ENCODE measurements at regions of chr11 and their contacts with region 1.

Region 1: DNA sequence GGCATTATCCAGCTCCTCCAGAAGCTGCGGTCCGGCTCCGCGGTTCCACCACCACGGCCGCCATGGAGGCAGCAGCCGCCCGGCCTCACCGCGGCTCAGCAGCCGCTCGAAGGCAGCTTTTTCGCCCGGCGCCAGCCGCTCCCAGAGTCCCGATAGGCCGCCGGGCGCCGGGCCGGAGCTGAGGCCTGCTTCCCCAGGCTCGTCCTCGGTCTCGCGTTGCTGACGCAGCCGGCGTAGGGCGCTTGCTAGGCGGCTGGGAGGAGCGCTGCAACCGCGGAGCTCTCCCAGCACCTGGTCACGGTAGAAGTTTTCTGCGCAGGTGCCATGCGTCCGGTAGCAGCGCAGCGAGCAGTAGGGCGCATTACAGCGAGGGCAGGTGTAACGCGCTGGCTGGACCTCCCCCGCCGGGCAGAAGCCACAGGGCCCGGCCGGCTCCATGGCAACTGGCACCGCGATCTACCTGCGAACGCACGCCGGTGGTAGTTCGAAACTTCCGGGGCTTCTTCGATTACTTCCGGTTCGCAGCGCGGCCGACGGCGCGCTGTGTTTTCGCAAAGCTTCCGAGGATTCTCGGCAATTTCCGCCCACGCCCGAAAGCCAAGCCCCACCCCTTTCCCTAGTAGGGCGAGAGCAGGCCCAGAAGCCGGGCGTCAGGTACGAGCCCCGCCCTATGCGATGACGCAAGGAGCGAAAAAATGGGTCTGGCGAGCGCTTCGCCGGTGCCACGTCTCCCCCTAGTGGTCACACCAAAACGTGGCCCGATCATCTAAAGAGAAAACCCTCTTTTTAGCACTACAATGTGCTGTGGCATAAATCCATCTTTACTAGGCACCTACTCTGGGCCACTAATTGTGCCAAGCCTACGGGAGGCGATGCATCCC is at the start of gene ZNHIT2:
- DNase-seq: peak; percentile 98 to 99
- H3K4me3 ChIP-seq: peak within 1 kb of the TSS; percentile 61 to 83 (median 72)
- H3K27ac ChIP-seq: peak within 1 kb of the TSS; percentile 78
- H3K4me1 ChIP-seq: peaks cover 2 to 22% (median 13%) of the 10 kb centered on the region in 4 experiments
- H3K27me3 ChIP-seq: no peaks in the 10 kb centered on the region
- CTCF ChIP-seq: peak in 2 of 3 experiments; percentile 79 to 92; a peak in 3 of 4 replicates
- EP300 ChIP-seq: peak in 1 of 2 experiments; percentile 75; a peak in 1 of 3 replicates
- POLR2A ChIP-seq: peak in 1 of 2 experiments; percentile 89; a peak in 2 of 3 replicates
- RAD21 ChIP-seq: peak; percentile 76 to 80
- total RNA-seq, gene ZNHIT2: 13.0 and 14.8 TPM in 2 replicates

Region 2: DNA sequence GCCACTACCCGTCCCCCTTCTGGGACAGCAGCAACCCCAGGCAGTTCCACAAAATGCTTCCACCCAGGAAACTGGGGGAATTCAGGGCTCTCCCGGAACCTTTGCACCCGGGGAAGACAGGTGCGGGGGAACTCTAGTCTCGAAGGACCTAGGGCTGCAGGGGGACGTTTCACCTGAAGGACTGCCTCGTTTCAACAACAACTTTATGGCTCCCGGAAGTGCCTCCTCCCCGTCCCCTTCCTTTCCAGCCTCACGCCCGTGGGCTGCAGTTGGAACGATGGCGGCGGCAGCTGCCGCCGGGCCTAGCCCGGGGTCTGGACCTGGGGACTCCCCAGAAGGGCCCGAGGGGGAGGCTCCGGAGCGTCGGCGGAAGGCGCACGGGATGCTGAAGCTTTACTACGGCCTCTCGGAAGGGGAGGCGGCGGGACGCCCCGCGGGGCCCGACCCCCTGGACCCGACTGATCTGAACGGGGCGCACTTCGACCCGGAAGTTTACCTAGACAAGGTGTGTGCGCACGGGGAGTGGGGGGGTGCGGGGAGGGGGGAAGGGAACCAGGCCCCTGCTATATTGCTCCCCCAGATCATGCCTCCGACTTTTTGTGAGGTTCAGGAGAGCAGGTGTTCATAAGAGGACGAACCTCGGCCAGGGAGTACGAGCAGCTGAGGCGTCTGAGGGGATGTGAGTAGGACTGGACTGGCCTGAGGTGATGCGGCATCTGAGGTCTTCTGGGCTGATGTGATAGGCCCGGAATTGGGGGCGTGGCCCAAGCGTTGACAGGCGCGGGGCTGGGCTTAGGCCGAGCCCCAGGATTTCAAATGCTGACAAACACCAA is 21.3 kb before region 1 on chr11 and contains the start of gene VPS51:
- CTCF ChIA-PET with region 1: interaction called, 85 read pairs
- POLR2A ChIA-PET with region 1: interaction called, 186 read pairs
- DNase-seq: peak; percentile 70 to 93
- H3K4me3 ChIP-seq: peak within 1 kb of the TSS; percentile 78 to 88 (median 78)
- H3K27ac ChIP-seq: peak within 1 kb of the TSS; percentile 67; the same call in 1 of the 2 replicates
- H3K4me1 ChIP-seq: peaks cover 0 to 6% (median 4%) of the 10 kb centered on the region in 4 experiments; a peak in 6 of 7 replicates
- H3K27me3 ChIP-seq: no peaks in the 10 kb centered on the region
- CTCF ChIP-seq: no peak
- EP300 ChIP-seq: peak in 1 of 2 experiments; percentile 86; a peak in 2 of 3 replicates
- POLR2A ChIP-seq: peak; percentile 75 to 86
- RAD21 ChIP-seq: no peak
- total RNA-seq, gene VPS51: 97.4 and 108 TPM in 2 replicates

Region 3: DNA sequence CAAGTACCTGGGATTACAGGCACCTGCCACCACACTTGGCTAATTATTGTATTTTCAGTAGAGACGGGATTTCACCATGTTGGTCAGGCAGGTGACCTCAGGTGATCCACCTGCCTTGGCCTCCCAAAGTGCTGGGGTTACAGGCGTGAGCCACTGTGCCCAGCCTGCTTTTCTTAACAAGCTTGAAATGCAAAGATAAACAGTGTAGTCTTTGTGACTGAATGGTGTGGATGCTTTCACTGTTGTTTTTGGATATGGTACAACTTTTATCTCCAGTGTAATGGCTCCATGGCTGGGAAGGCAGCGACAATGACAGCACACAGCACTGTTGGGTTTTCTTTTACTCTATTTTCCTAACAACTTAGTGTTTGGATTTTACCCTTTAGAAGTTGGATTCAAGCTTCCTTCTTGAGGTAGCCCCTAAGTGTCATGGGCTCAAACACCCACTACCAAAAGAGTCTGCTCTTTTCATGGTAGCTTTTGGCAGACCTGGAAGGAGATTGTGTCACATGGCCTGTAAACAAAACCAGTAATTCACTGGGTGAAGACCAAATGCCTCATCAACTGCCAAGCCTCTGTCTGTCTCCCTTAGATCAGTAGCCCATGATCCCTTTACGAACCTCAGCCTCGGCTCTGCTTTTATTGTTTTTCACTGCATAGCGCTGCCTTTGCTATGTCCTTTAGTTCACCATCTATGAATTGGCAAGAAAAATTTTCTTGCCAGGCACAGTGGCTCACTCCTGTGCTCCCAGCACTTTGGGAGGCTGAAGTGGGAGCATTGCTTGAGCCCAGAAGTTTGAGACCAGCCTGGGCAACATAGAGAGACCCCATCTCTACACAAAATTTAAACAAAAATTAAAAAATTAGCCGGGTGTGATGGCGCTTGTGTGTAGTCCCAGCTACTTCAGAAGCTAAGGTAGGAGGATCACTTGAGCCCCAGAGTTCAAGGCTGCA is 15.0 kb before region 1 on chr11:
- CTCF ChIA-PET with region 1: interaction called, 85 read pairs
- POLR2A ChIA-PET with region 1: interaction called, 186 read pairs
- DNase-seq: no peak
- H3K4me3 ChIP-seq: no peak overlapping the region
- H3K27ac ChIP-seq: no peak overlapping the region
- H3K4me1 ChIP-seq: no peaks in the 10 kb centered on the region
- H3K27me3 ChIP-seq: no peaks in the 10 kb centered on the region
- CTCF ChIP-seq: no peak
- EP300 ChIP-seq: no peak
- POLR2A ChIP-seq: no peak
- RAD21 ChIP-seq: no peak

Region 4: GRCh38 chr11:65323813-65324212 is 206.4 kb after region 1 on chr11:
- CTCF ChIA-PET with region 1: no interaction called
- POLR2A ChIA-PET with region 1: no interaction called
- DNase-seq: no peak
- H3K4me3 ChIP-seq: no peak overlapping the region
- H3K27ac ChIP-seq: no peak overlapping the region
- H3K4me1 ChIP-seq: no peaks in the 10 kb centered on the region; a peak in 2 of 7 replicates
- H3K27me3 ChIP-seq: no peaks in the 10 kb centered on the region
- CTCF ChIP-seq: no peak
- EP300 ChIP-seq: no peak
- POLR2A ChIP-seq: no peak
- RAD21 ChIP-seq: no peak